ENCODE measurements at regions of chr4 and their contacts with region 1.

Region 1: GRCh38 chr4:83267121-83267829 is 17.3 kb downstream of the COQ2 start:
- DNase-seq: no peak
- ATAC-seq: no peak
- H3K4me3 ChIP-seq: no peak overlapping the region
- H3K27ac ChIP-seq: no peak overlapping the region
- H3K4me1 ChIP-seq: no peaks in the 10 kb centered on the region
- H3K27me3 ChIP-seq: no peaks in the 10 kb centered on the region
- CTCF ChIP-seq: no peak
- POLR2A ChIP-seq: no peak

Region 2: GRCh38 chr4:83067058-83067639 is 200.1 kb before region 1 on chr4:
- intact Hi-C with region 1: loop called in 4 of 10 experiments (anchors 5 kb)
- DNase-seq: no peak
- ATAC-seq: no peak
- H3K4me3 ChIP-seq: no peak overlapping the region
- H3K27ac ChIP-seq: no peak overlapping the region
- H3K4me1 ChIP-seq: peaks cover 0 to 8% (median 0%) of the 10 kb centered on the region in 12 donors
- H3K27me3 ChIP-seq: no peaks in the 10 kb centered on the region
- CTCF ChIP-seq: no peak
- POLR2A ChIP-seq: no peak